Prostate gland (tissue), 2 donors: ENCODE measurements at regions of chr19 and their contacts with region 1.

Region 1: DNA sequence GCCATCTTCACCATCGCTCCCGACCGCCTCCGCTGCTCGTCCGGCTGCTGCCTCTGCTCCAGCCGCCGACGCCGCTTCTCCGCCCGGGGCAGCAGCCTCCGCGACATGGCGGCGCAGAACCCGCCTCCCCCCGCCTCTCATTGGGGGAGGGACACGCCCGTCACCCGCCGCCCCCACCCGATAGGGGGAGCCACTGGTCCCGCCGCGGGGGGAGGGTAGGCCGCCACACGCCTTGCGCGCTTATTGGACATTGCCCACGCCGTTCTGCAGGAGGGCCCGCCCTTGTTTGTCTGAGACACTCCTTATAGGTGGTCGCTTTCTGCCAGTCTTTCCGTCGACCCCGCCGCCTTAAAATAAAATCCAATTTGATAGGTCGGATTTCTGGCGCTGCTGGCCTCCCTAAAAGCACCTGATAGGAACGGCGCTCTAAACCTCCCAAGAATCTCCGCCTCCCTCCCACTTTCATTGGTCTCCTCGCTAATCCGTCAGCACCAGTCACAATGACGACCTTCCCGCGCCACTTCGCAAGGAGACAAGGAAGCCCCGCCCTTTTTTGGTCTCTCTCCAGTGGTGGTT is at the start of gene HNRNPL:
- DNase-seq: peak; percentile 100
- H3K4me3 ChIP-seq: peak within 1 kb of the TSS; percentile 97 to 100
- H3K27ac ChIP-seq: peak within 1 kb of the TSS; percentile 100
- H3K4me1 ChIP-seq: peaks cover 14% of the 10 kb centered on the region
- H3K27me3 ChIP-seq: no peaks in the 10 kb centered on the region
- CTCF ChIP-seq: peak; percentile 61 to 96 (median 76)
- POLR2A ChIP-seq: peak; percentile 94
- total RNA-seq, gene HNRNPL: 210 to 231 TPM

Region 2: GRCh38 chr19:38618590-38619360 is 231.2 kb before region 1 on chr19 and contains the start of gene EIF3K:
- intact Hi-C with region 1: loop called (anchors 5 kb)
- DNase-seq: peak; percentile 98
- H3K4me3 ChIP-seq: peak within 1 kb of the TSS; percentile 58 to 75
- H3K27ac ChIP-seq: peak within 1 kb of the TSS; percentile 52 to 70
- H3K4me1 ChIP-seq: peaks cover 2% of the 10 kb centered on the region
- H3K27me3 ChIP-seq: no peaks in the 10 kb centered on the region
- CTCF ChIP-seq: peak in 2 of 4 experiments; percentile 11 to 29
- POLR2A ChIP-seq: peak; percentile 51
- total RNA-seq, gene EIF3K: 368 to 618 TPM

Region 3: DNA sequence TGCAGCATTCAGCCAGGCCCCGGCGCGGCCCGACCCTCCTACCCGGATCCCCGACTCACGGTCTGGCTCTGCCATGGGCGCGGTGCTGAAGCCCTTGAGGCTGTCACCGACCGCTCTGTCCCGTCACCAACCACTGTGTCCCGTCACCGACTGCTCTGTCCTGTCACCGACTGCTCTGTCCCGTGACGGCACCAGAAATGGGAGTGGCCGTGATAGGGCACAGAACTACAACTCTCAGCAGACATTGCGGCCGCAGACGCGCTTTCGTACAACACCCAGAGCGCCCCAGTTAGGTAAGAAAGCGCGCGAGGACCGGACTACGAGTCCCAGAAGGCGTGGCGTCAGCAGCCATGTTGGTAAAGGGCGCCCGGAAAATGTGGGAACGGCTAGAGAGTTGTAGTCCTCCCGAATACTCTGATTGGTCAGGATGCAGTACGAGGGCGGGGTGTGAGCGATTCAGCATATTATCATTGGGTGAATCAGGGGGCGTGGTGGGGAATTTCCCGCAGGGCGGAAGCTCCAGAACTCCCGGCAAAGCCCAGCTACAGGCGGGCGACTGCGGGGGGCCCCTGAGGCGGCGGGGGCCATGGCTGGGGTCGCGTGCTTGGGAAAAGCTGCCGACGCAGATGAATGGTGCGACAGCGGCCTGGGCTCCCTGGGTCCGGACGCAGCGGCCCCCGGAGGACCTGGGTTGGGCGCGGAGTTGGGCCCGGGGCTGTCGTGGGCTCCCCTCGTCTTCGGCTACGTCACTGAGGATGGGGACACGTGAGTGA is 49.7 kb after region 1 on chr19 and contains the starts of genes NFKBIB and SIRT2:
- intact Hi-C with region 1: loop called (anchors 5 kb)
- DNase-seq: peak; percentile 100
- H3K4me3 ChIP-seq: peak within 1 kb of the TSS; percentile 76 to 85
- H3K27ac ChIP-seq: peak within 1 kb of the TSS; percentile 84 to 87
- H3K4me1 ChIP-seq: peaks cover 4% of the 10 kb centered on the region
- H3K27me3 ChIP-seq: no peaks in the 10 kb centered on the region
- CTCF ChIP-seq: no peak
- POLR2A ChIP-seq: peak; percentile 84
- total RNA-seq, gene NFKBIB: 29.8 to 50.6 TPM
- total RNA-seq, gene SIRT2: 55.8 to 89.0 TPM

Region 4: DNA sequence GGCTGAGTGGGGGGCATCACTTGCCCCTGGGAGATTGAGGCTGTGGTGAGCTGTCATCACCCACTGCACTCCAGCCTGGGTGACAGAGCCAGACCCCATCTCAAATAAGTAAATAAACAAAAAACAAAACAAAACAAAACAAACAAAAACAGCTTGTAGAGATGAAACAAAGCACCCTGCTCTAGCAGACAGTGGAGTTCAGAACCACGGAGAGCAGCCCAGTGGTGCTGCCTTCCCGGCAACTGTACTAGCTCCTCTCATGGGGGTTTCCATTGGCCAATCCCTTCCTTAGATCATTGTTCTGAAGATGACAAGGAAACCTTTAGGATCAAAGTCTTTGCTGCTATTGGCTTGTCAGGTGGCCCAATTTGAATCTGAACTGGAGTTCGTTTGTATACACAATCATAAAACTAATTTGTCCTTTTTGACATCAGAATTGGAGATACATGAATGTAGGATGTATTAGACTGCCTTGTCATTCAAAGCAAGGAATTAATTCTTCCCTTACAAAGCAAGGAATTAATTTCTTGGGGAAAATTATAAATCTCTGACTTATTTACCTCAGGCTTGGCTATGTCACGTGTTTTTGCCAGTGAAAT is 373.8 kb after region 1 on chr19:
- intact Hi-C with region 1: no loop called
- DNase-seq: no peak
- H3K4me3 ChIP-seq: no peak overlapping the region
- H3K27ac ChIP-seq: no peak overlapping the region
- H3K4me1 ChIP-seq: no peaks in the 10 kb centered on the region
- H3K27me3 ChIP-seq: peaks cover 2% of the 10 kb centered on the region
- CTCF ChIP-seq: no peak
- POLR2A ChIP-seq: no peak